HAP-1 (cell line): ENCODE measurements at regions of chr5 and their contacts with region 1.

Region 1: DNA sequence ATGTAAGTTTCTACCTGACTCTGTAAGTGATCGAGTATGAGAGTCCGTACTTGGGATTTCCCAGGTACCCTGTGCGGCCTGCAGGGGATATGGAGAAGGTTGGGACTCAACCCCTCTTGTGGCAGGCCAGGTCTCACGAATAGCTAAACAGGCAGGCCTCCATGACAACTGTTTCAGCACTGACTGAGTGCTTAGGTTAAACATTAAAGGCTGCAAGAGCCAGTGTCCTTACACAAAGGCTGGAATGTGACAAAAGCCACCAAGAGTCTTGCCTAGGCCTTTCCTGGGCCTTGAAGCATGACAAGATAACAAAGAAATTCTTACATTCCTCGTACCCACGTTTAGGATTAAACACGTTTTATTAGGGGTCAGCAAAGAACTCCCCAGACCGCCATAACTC is 58.6 kb downstream of the THBS4 start:
- DNase-seq: peak in 1 of 2 experiments; percentile 29
- H3K4me3 ChIP-seq: no peak overlapping the region
- H3K4me1 ChIP-seq: no peaks in the 10 kb centered on the region
- H3K27me3 ChIP-seq: no peaks in the 10 kb centered on the region

Region 2: GRCh38 chr5:79672392-79672791 is 421.4 kb before region 1 on chr5:
- in situ Hi-C with region 1: no loop called
- DNase-seq: no peak
- H3K4me3 ChIP-seq: no peak overlapping the region
- H3K4me1 ChIP-seq: peaks cover 14% of the 10 kb centered on the region
- H3K27me3 ChIP-seq: no peaks in the 10 kb centered on the region

Region 3: DNA sequence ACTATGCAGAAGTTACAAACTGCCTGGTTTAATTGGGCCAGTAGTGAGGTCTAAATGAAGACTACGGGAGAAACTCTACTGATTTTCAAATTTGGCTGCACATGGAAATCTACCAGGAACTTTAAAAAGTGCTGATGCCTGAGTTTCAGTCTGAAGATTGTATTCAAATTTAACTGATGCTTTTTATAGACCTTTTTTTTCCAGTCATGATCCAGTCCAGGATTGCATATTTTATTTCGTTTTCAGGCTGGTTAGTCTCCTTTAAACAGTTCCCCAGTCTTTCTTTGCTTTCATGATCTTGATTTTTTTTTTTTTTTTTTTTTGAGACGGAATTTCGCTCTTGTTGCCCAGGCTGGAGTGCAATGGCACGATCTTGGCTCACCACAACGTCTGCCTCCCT is 202.3 kb after region 1 on chr5:
- in situ Hi-C with region 1: loop called (anchors 5 kb)
- DNase-seq: no peak
- H3K4me3 ChIP-seq: no peak overlapping the region
- H3K4me1 ChIP-seq: no peaks in the 10 kb centered on the region
- H3K27me3 ChIP-seq: no peaks in the 10 kb centered on the region